BJ (cell line): ENCODE measurements at regions of chr16 and their contacts with region 1.

Region 1: DNA sequence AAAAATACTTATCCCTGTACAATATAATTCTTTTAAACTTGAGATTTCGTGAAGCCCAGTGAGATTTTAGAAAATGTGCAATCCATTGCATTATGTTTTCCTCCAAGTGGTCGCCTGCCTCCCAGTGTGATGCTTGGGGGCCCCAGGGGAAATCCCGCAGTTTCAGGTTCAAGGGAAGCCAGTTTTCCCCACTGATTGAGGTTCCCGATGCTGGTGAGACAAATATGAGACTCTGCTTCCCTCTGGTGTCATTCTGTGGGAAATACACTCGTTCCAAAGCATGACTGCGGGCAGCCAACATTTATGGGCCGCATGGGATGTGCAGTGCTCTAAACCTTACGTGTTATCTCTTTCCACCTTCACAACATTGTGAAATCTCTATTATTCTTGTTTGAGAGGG is 200.8 kb downstream of the PRKCB start:
- DNase-seq: no peak
- H3K4me3 ChIP-seq: no peak overlapping the region
- H3K27me3 ChIP-seq: no peaks in the 10 kb centered on the region
- CTCF ChIP-seq: peak; percentile 73

Region 2: DNA sequence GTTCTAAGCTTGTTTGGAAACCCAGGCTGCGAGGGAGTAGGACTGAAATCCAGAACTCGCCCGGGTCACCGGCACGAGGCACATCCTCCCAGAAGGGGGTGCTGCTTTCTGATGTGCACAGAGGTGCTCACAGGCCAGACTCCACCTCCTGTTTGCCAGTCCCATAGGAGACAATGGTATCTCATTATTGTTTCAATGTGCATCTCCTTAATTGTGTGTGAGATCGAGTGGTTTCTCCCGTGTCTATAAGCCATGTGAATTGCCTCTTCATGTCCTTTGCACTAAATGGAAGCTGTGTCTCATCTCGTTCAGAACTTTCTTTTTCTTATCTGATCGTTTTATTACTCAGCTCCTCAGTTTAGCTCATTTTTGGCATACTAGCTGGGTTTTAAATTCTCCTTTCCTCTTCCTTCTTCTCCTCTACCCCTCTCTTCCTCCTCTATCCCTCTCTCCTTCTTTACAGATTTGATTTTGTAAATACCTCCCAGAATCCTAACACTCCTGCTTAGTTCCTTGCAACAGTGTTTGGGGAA is 233.0 kb before region 1 on chr16:
- CTCF ChIA-PET with region 1: interaction called, 48 read pairs
- POLR2A ChIA-PET with region 1: no interaction called
- DNase-seq: no peak
- H3K4me3 ChIP-seq: no peak overlapping the region
- H3K27me3 ChIP-seq: no peaks in the 10 kb centered on the region
- CTCF ChIP-seq: peak; percentile 61

Region 3: DNA sequence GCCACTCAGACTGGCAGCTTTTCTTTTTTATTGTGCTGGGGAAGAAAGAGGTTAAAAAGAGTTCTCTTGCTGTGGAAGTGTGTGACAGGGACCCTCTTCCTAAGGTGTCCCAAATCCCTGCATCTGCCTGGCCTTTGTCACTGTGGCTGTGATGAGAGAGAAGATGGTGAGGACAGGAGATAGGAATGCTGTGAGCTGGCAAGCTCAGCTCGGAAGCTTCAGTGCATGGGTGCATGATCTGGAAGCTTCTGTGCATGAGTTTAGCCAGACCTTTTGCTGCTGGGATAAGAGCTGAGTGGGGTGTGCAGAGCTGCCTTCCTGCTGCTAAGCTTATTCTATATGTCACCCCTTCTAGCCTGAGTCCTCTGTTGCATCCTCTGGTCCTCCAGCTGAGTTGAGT is 116.2 kb after region 1 on chr16:
- CTCF ChIA-PET with region 1: no interaction called
- POLR2A ChIA-PET with region 1: no interaction called
- DNase-seq: no peak
- H3K4me3 ChIP-seq: no peak overlapping the region
- H3K27me3 ChIP-seq: no peaks in the 10 kb centered on the region
- CTCF ChIP-seq: no peak